ENCODE measurements at regions of chr3 and their contacts with region 1.

Region 1: DNA sequence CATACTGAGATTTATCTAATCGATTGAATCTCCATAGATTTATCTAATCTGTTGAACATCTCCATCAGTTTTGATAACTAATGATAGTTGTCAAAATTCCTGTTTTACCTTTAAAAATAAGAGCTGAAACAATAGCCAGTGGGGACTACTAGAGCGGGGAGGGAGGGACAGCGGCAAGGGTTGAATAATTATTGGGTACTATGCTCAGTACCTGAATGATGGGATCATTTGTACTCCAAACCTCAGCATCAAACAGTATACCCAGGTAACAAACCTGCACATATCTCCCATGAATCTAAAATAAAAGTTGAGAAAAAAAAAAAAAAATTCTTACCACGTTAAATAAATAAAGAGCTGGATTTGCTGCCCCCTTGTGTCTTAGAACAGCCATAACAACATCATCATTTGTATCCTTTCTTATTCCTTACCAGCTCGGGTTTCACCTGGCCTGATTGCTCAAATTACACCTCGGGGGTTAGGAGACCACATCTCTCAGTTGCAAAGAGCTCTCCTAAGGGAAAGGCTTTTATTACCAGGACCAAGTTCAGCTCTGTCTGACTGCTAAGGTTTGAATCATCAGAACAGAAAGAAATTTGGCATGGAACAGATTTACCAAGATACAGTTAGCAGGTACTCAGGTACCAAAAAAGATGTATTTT is 25.7 kb upstream of the RPL39L start:
- DNase-seq: peak; percentile 55
- ATAC-seq: peak; percentile 71
- H3K4me3 ChIP-seq: no peak overlapping the region
- H3K27ac ChIP-seq: no peak overlapping the region
- H3K4me1 ChIP-seq: peaks cover 2% of the 10 kb centered on the region; the same call in 1 of the 2 replicates
- H3K27me3 ChIP-seq: peaks cover 24% of the 10 kb centered on the region
- CTCF ChIP-seq: peak; percentile 69
- POLR2A ChIP-seq: no peak
- RAD21 ChIP-seq: peak; percentile 61

Region 2: GRCh38 chr3:186849374-186849975 is 315.5 kb before region 1 on chr3:
- CTCF ChIA-PET with region 1: interaction called, 5 read pairs
- POLR2A ChIA-PET with region 1: interaction called, 9 read pairs
- dilution Hi-C with region 1: no loop called
- in situ Hi-C with region 1: loop called (anchors 10 kb)
- intact Hi-C with region 1: loop called (anchors 1 kb)
- DNase-seq: peak; percentile 38
- ATAC-seq: 0 out of 2 replicates have a peak, but pooled peaks have one; percentile 37
- H3K4me3 ChIP-seq: no peak overlapping the region
- H3K27ac ChIP-seq: no peak overlapping the region
- H3K4me1 ChIP-seq: no peaks in the 10 kb centered on the region
- H3K27me3 ChIP-seq: peaks cover 32% of the 10 kb centered on the region
- CTCF ChIP-seq: peak; percentile 42
- POLR2A ChIP-seq: no peak
- RAD21 ChIP-seq: peak; percentile 45

Region 3: GRCh38 chr3:187101184-187102072 is 63.6 kb before region 1 on chr3:
- CTCF ChIA-PET with region 1: interaction called, 12 read pairs
- POLR2A ChIA-PET with region 1: no interaction called
- dilution Hi-C with region 1: no loop called
- in situ Hi-C with region 1: no loop called
- intact Hi-C with region 1: no loop called
- DNase-seq: peak; percentile 71
- ATAC-seq: peak; percentile 78
- H3K4me3 ChIP-seq: peak overlapping the region; percentile 41; the same call in 1 of the 2 replicates
- H3K27ac ChIP-seq: peak overlapping the region; percentile 27; the same call in 1 of the 2 replicates
- H3K4me1 ChIP-seq: peaks cover 5% of the 10 kb centered on the region
- H3K27me3 ChIP-seq: no peaks in the 10 kb centered on the region
- CTCF ChIP-seq: no peak
- POLR2A ChIP-seq: no peak
- RAD21 ChIP-seq: no peak

Region 4: GRCh38 chr3:187112934-187113793 is 51.9 kb before region 1 on chr3:
- CTCF ChIA-PET with region 1: interaction called, 15 read pairs
- POLR2A ChIA-PET with region 1: no interaction called
- dilution Hi-C with region 1: no loop called
- in situ Hi-C with region 1: no loop called
- intact Hi-C with region 1: loop called (anchors 2 kb)
- DNase-seq: peak; percentile 48
- ATAC-seq: peak; percentile 86
- H3K4me3 ChIP-seq: no peak overlapping the region
- H3K27ac ChIP-seq: no peak overlapping the region
- H3K4me1 ChIP-seq: no peaks in the 10 kb centered on the region
- H3K27me3 ChIP-seq: no peaks in the 10 kb centered on the region
- CTCF ChIP-seq: peak; percentile 57
- POLR2A ChIP-seq: no peak
- RAD21 ChIP-seq: peak; percentile 56

Region 5: GRCh38 chr3:187139126-187139894 is 25.7 kb before region 1 on chr3 and contains the start of gene RPL39L:
- CTCF ChIA-PET with region 1: interaction called, 13 read pairs
- POLR2A ChIA-PET with region 1: no interaction called
- dilution Hi-C with region 1: no loop called
- in situ Hi-C with region 1: no loop called
- intact Hi-C with region 1: no loop called
- DNase-seq: peak; percentile 76
- ATAC-seq: peak; percentile 99
- H3K4me3 ChIP-seq: peak within 1 kb of the TSS; percentile 67
- H3K27ac ChIP-seq: peak within 1 kb of the TSS; percentile 63
- H3K4me1 ChIP-seq: no peaks in the 10 kb centered on the region
- H3K27me3 ChIP-seq: peaks cover 6% of the 10 kb centered on the region
- CTCF ChIP-seq: peak; percentile 89
- POLR2A ChIP-seq: 0 out of 2 replicates have a peak, but pooled peaks have one; percentile 18
- RAD21 ChIP-seq: peak; percentile 45
- total RNA-seq, gene RPL39L: 32.5 and 34.6 TPM in 2 replicates